ENCODE measurements at regions of chr12 and their contacts with region 1.

Region 1: GRCh38 chr12:56565510-56566101 is 44.0 kb downstream of the RBMS2 start:
- DNase-seq: peak; percentile 22 to 73
- ATAC-seq: peak; percentile 70 to 90
- H3K4me3 ChIP-seq: no peak overlapping the region
- H3K27ac ChIP-seq: peak overlapping the region in 1 of 2 experiments; percentile 17; a peak in 1 of 6 replicates
- H3K4me1 ChIP-seq: 0 out of 3 replicates have a peak, but pooled peaks cover 6% of the 10 kb centered on the region
- CTCF ChIP-seq: no peak
- EP300 ChIP-seq: no peak
- POLR2A ChIP-seq: no peak
- RAD21 ChIP-seq: no peak

Region 2: DNA sequence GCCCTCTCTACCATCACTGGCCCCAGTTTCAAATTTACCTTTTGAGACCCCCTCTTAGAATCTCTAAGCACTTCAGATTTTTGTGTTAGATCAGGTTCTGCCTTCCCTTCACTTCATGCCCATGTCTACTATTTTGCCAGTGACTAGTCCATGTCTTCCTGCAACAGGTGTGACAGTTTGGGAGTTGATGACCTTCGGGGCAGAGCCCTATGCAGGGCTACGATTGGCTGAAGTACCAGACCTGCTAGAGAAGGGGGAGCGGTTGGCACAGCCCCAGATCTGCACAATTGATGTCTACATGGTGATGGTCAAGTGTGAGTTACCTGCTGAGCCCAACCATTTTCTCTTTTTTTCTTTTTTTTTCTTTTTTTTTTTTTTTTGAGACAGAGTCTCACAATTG is 467.0 kb before region 1 on chr12:
- CTCF ChIA-PET with region 1: no interaction called
- POLR2A ChIA-PET with region 1: no interaction called
- DNase-seq: no peak
- ATAC-seq: no peak
- H3K4me3 ChIP-seq: no peak overlapping the region
- H3K27ac ChIP-seq: no peak overlapping the region
- H3K4me1 ChIP-seq: peaks cover 7% of the 10 kb centered on the region
- CTCF ChIP-seq: no peak
- EP300 ChIP-seq: no peak
- POLR2A ChIP-seq: no peak
- RAD21 ChIP-seq: no peak

Region 3: GRCh38 chr12:56510786-56511185 is 54.8 kb before region 1 on chr12:
- CTCF ChIA-PET with region 1: interaction called, 87 read pairs
- POLR2A ChIA-PET with region 1: interaction called, 3 read pairs
- DNase-seq: no peak
- ATAC-seq: no peak
- H3K4me3 ChIP-seq: no peak overlapping the region
- H3K27ac ChIP-seq: no peak overlapping the region
- H3K4me1 ChIP-seq: no peaks in the 10 kb centered on the region
- CTCF ChIP-seq: no peak
- EP300 ChIP-seq: no peak
- POLR2A ChIP-seq: no peak
- RAD21 ChIP-seq: no peak

Region 4: DNA sequence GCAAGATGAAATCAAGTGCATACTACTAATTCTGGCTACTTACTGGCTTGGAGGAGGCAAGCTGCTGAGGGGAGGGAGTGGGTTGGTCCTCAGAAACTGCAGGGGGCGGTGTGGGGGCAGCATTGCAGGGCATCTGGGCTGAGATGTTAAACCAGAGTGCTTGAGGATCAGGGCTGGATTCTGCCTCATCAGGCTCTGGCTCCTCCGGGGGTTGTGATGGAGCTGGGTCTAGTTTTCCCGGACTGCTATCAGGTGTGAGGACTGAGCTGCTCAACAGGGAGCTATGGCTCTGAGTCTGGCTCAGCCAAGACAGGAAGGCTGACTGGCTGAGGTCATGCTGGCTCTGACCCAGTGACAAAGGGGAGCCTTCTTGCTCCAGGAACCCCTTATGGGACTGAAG is 35.9 kb after region 1 on chr12:
- CTCF ChIA-PET with region 1: no interaction called
- POLR2A ChIA-PET with region 1: no interaction called
- DNase-seq: peak; percentile 29 to 43
- ATAC-seq: peak; percentile 40 to 72; a peak in 4 of 6 replicates
- H3K4me3 ChIP-seq: no peak overlapping the region
- H3K27ac ChIP-seq: no peak overlapping the region
- H3K4me1 ChIP-seq: no peaks in the 10 kb centered on the region
- CTCF ChIP-seq: peak; percentile 14; the same call in 1 of the 3 replicates
- EP300 ChIP-seq: no peak
- POLR2A ChIP-seq: no peak
- RAD21 ChIP-seq: peak in 1 of 2 experiments; percentile 43; a peak in 2 of 5 replicates

Region 5: GRCh38 chr12:56766535-56766934 is 200.9 kb after region 1 on chr12:
- CTCF ChIA-PET with region 1: no interaction called
- POLR2A ChIA-PET with region 1: no interaction called
- DNase-seq: no peak
- ATAC-seq: no peak
- H3K4me3 ChIP-seq: no peak overlapping the region
- H3K27ac ChIP-seq: no peak overlapping the region
- H3K4me1 ChIP-seq: peaks cover 12% of the 10 kb centered on the region; the same call in 1 of the 3 replicates
- CTCF ChIP-seq: no peak
- EP300 ChIP-seq: no peak
- POLR2A ChIP-seq: no peak
- RAD21 ChIP-seq: no peak

Measured in A549 (cell line).